ENCODE measurements at regions of chr15 and their contacts with region 1.

Region 1: GRCh38 chr15:95972041-95972553 is 358.4 kb upstream of the NR2F2 start:
- DNase-seq: no peak
- ATAC-seq: no peak
- H3K4me3 ChIP-seq: no peak overlapping the region
- H3K27ac ChIP-seq: no peak overlapping the region
- H3K4me1 ChIP-seq: peaks cover 32% of the 10 kb centered on the region
- H3K27me3 ChIP-seq: no peaks in the 10 kb centered on the region
- CTCF ChIP-seq: no peak
- EP300 ChIP-seq: no peak
- POLR2A ChIP-seq: no peak
- RAD21 ChIP-seq: no peak

Region 2: GRCh38 chr15:95929232-95929846 is 42.8 kb before region 1 on chr15:
- CTCF ChIA-PET with region 1: interaction called, 3 read pairs
- POLR2A ChIA-PET with region 1: interaction called, 4 read pairs
- RAD21 ChIA-PET with region 1: interaction called, 13 read pairs
- SMC1A ChIA-PET with region 1: interaction called, 11 read pairs
- in situ Hi-C with region 1: no loop called
- intact Hi-C with region 1: no loop called
- DNase-seq: peak; percentile 48
- ATAC-seq: peak; percentile 98
- H3K4me3 ChIP-seq: no peak overlapping the region
- H3K27ac ChIP-seq: no peak overlapping the region
- H3K4me1 ChIP-seq: no peaks in the 10 kb centered on the region
- H3K27me3 ChIP-seq: no peaks in the 10 kb centered on the region
- CTCF ChIP-seq: no peak
- EP300 ChIP-seq: peak; percentile 69 to 86; a peak in 3 of 4 replicates
- POLR2A ChIP-seq: no peak
- RAD21 ChIP-seq: no peak

Region 3: DNA sequence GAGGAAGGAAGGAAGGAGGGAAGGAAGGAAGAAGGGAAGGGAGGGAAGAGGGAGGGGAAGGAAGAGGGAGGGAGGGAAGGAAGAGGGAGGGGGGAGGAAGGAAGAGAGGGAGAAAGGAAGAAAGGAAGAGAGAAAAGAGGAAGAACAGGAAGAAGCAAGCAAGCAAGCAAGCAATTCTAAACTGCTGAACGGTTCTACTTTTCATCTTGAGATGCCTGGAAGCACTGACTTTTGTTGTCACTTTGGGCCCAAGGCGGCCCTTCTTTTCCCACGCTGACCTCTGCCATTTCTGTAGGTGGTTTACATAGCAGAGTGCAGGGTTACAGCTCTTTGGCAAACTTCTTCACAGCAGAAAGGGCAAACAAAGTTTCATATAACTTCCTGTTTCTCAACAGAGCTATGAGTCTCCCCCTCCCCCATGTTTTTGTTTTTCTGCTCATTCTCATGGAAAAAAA is 16.3 kb after region 1 on chr15:
- CTCF ChIA-PET with region 1: interaction called, 6 read pairs
- POLR2A ChIA-PET with region 1: interaction called, 4 read pairs
- RAD21 ChIA-PET with region 1: interaction called, 13 read pairs
- SMC1A ChIA-PET with region 1: interaction called, 15 read pairs
- in situ Hi-C with region 1: no loop called
- intact Hi-C with region 1: no loop called
- DNase-seq: no peak
- ATAC-seq: peak; percentile 57
- H3K4me3 ChIP-seq: no peak overlapping the region
- H3K27ac ChIP-seq: no peak overlapping the region
- H3K4me1 ChIP-seq: peaks cover 16% of the 10 kb centered on the region
- H3K27me3 ChIP-seq: no peaks in the 10 kb centered on the region
- CTCF ChIP-seq: no peak
- EP300 ChIP-seq: no peak
- POLR2A ChIP-seq: no peak
- RAD21 ChIP-seq: no peak

Region 4: GRCh38 chr15:96011136-96011535 is 39.0 kb after region 1 on chr15:
- CTCF ChIA-PET with region 1: no interaction called
- POLR2A ChIA-PET with region 1: no interaction called
- RAD21 ChIA-PET with region 1: no interaction called
- SMC1A ChIA-PET with region 1: no interaction called
- in situ Hi-C with region 1: no loop called
- intact Hi-C with region 1: no loop called
- DNase-seq: no peak
- ATAC-seq: no peak
- H3K4me3 ChIP-seq: no peak overlapping the region
- H3K27ac ChIP-seq: no peak overlapping the region
- H3K4me1 ChIP-seq: no peaks in the 10 kb centered on the region
- H3K27me3 ChIP-seq: no peaks in the 10 kb centered on the region
- CTCF ChIP-seq: no peak
- EP300 ChIP-seq: no peak
- POLR2A ChIP-seq: no peak
- RAD21 ChIP-seq: no peak

Region 5: DNA sequence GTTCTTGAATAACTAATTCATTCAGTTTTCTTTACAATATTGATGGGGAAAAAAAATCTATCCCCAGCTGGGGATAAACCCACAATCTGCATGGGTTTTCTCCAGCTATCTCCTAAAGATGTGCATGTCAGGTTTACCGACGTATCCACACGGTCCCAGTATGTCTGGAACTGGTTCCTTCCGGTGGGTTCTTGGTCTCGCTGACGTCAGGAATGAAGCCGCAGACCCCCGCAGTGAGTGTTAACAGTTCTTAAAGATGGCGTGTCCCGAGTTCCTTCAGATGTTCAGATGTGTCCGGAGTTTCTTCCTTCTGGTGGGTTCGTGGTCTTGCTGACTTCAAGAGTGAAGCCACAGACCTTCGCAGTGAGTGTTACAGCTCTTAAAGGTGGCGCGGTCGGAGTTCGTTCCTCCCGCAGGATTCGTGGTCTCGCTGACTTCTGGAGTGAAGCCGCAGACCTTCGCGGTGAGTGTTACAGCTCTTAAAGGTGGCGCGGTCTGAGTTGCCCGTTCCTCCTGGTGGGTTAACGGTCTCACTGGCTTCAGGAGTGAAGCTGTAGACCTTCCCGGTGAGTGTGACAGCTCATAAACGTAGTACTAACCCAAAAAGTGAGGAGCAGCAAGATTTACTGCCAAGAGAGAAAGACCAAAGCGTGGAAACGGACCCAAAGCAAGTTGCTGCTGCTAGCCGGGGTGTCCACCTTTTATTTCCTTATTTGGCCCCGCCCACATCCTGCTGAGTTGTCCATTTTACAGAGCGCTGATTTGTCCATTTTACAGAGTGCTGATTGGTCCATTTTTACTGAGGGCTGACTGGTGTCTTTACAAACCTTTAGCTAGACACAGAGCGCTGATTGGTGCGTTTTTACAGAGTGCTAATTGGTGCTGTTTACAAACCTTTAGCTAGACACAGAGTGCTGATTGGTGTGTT is 163.3 kb after region 1 on chr15:
- CTCF ChIA-PET with region 1: no interaction called
- POLR2A ChIA-PET with region 1: no interaction called
- RAD21 ChIA-PET with region 1: no interaction called
- SMC1A ChIA-PET with region 1: no interaction called
- in situ Hi-C with region 1: no loop called
- intact Hi-C with region 1: no loop called
- DNase-seq: no peak
- ATAC-seq: no peak
- H3K4me3 ChIP-seq: no peak overlapping the region
- H3K27ac ChIP-seq: no peak overlapping the region
- H3K4me1 ChIP-seq: peaks cover 4% of the 10 kb centered on the region; the same call in 1 of the 2 replicates
- H3K27me3 ChIP-seq: no peaks in the 10 kb centered on the region
- CTCF ChIP-seq: no peak
- EP300 ChIP-seq: no peak
- POLR2A ChIP-seq: no peak
- RAD21 ChIP-seq: no peak

Measured in GM12878 (cell line).